Activated CD4-positive, alpha-beta T cell treated with anti-CD3 and anti-CD28 coated beads, Interleukin-2, amount 10 ng/mL, durations not matched to agents 7 days and 5 days (primary cell): ENCODE measurements at regions of chr2 and their contacts with region 1.

Region 1: GRCh38 chr2:86035883-86036668 is 69.6 kb downstream of the POLR1A start:
- DNase-seq: peak; percentile 81
- H3K4me3 Mint-ChIP-seq: peak overlapping the region; percentile 65
- H3K27ac Mint-ChIP-seq: peak overlapping the region; percentile 99
- H3K4me1 Mint-ChIP-seq: peaks cover 77% of the 10 kb centered on the region
- H3K27me3 Mint-ChIP-seq: no peaks in the 10 kb centered on the region

Region 2: DNA sequence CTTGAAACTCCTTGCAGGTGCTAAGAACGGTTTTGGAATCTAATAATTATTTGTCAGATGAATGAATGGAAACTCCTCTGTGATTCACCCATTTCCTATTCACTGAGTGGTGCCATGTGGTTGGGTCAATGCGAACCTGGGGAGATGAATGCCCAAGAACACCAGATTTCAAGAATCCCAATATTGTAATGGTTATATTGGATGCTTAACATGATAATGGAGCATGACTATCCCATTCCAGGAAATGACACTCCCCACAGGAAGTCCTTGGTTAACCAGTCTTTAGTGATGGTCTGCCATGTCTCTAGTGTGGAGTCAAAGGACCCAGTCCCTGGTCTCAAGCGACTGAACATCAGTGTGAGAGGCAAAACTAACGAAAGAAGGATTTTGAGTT is 79.4 kb before region 1 on chr2:
- CTCF ChIA-PET with region 1: no interaction called
- POLR2A ChIA-PET with region 1: no interaction called
- DNase-seq: no peak
- H3K4me3 Mint-ChIP-seq: no peak overlapping the region
- H3K27ac Mint-ChIP-seq: no peak overlapping the region
- H3K4me1 Mint-ChIP-seq: peaks cover 5% of the 10 kb centered on the region
- H3K27me3 Mint-ChIP-seq: no peaks in the 10 kb centered on the region

Region 3: DNA sequence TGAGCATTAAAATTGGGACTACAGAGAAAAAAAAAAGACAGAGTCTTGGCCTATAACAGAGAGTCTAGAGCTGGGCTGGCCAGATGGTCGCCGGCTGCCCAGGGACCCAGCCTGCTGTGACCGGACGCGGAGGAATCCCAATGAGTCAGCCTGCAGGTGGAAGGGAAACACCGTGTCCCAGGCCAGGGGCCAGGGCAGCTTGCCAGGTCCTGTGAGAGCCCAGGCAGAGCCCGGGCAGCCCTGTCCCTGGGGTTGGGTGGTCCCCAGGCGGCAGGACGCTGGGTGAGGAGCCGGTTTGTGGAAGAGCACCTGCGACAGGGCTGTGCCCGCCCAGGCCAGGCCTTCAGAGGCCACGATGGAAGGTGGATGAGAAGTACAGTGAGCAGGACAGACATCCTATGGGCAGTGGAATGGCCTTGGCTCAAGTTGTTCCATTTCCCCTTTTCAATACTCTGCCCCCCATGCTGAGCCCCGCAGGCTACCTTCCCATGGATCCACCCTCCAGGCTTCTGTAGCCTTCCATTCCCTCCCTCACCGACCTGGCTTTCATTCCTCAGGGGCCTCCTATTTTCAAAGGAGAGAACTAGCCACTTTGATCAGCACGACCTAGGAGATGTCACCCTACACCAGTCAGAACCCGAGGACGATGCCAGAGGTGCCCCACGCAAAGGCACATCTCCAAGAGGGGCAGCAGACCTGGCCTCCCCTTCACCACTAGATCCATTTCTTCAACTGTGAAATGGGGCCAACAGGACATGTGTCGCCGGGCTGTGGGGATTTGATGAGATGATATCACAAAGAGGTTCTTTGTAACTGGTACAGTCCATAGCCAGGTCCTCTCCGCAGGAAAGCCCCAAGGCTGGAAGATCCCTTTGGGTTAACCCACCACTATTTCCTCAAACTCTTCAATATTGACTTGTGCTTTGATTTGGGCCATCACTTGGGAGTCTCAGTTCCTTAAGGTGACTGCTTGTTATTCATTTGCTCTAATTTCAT is 17.9 kb before region 1 on chr2:
- CTCF ChIA-PET with region 1: interaction called, 26 read pairs
- POLR2A ChIA-PET with region 1: no interaction called
- DNase-seq: no peak
- H3K4me3 Mint-ChIP-seq: no peak overlapping the region
- H3K27ac Mint-ChIP-seq: peak overlapping the region; percentile 26
- H3K4me1 Mint-ChIP-seq: peaks cover 20% of the 10 kb centered on the region
- H3K27me3 Mint-ChIP-seq: no peaks in the 10 kb centered on the region

Region 4: GRCh38 chr2:86025229-86025820 is 10.8 kb before region 1 on chr2:
- CTCF ChIA-PET with region 1: interaction called, 26 read pairs
- POLR2A ChIA-PET with region 1: no interaction called
- DNase-seq: no peak
- H3K4me3 Mint-ChIP-seq: no peak overlapping the region
- H3K27ac Mint-ChIP-seq: no peak overlapping the region
- H3K4me1 Mint-ChIP-seq: peaks cover 6% of the 10 kb centered on the region
- H3K27me3 Mint-ChIP-seq: no peaks in the 10 kb centered on the region

Region 5: DNA sequence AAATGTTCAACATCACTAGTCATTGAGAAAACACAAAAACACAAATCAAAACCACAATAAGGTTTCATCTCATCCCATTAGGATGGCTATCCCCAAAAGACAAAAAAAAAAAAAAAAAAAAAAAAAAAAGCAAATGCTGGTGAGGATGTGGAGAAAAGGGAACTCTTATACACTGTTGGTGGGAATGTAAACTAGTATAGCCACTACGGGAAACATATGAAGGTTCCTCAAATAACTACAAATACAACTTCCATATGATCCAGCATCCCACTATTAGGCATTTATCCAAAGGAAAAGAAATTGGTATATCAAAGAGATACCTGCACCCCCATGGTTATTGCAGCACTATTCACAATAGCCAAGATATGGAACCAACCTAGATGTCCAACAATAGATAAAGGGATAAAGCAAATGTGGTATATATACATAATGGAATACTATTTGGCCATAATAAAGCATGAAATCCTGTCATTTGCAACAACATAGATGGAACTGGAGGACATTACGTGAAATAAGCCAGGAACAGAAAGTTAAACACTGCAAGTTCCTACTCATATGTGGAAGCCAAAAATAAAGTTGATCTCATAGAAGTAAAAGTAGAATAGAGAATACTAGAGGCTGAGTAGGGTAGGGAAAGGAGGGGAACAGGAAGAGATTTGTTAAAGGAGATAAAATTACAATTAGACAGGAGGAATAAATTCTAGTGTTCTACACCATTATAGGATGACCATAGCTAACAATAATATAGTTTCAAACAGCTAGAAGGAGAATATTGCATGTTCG is 61.2 kb after region 1 on chr2:
- CTCF ChIA-PET with region 1: no interaction called
- POLR2A ChIA-PET with region 1: no interaction called
- DNase-seq: no peak
- H3K4me3 Mint-ChIP-seq: no peak overlapping the region
- H3K27ac Mint-ChIP-seq: no peak overlapping the region
- H3K4me1 Mint-ChIP-seq: peaks cover 13% of the 10 kb centered on the region
- H3K27me3 Mint-ChIP-seq: no peaks in the 10 kb centered on the region